Activated CD8-positive, alpha-beta T cell treated with anti-CD3 and anti-CD28 coated beads, Interleukin-2, amount 10 ng/mL, durations not matched to agents 7 days and 5 days (primary cell): ENCODE measurements at regions of chr7 and their contacts with region 1.

Region 1: GRCh38 chr7:65373608-65374351 is at the start of gene ZNF92:
- DNase-seq: peak; percentile 98
- ATAC-seq: peak; percentile 98
- H3K4me3 Mint-ChIP-seq: peak within 1 kb of the TSS; percentile 94
- H3K27ac Mint-ChIP-seq: peak within 1 kb of the TSS; percentile 96
- H3K4me1 Mint-ChIP-seq: peaks cover 29% of the 10 kb centered on the region
- H3K27me3 Mint-ChIP-seq: no peaks in the 10 kb centered on the region
- total RNA-seq, gene ZNF92: 15.3 to 17.3 TPM

Region 2: GRCh38 chr7:65006094-65006992 is 367.4 kb before region 1 on chr7 and contains the start of gene ERV3-1:
- CTCF ChIA-PET with region 1: no interaction called
- POLR2A ChIA-PET with region 1: interaction called, 12 read pairs
- DNase-seq: peak; percentile 97
- ATAC-seq: peak; percentile 100
- H3K4me3 Mint-ChIP-seq: peak within 1 kb of the TSS; percentile 93
- H3K27ac Mint-ChIP-seq: peak within 1 kb of the TSS; percentile 93
- H3K4me1 Mint-ChIP-seq: peaks cover 27% of the 10 kb centered on the region
- H3K27me3 Mint-ChIP-seq: no peaks in the 10 kb centered on the region
- total RNA-seq, gene ERV3-1: 12.5 to 14.8 TPM

Region 3: GRCh38 chr7:65325793-65326432 is 47.9 kb before region 1 on chr7:
- CTCF ChIA-PET with region 1: no interaction called
- POLR2A ChIA-PET with region 1: no interaction called
- DNase-seq: no peak
- ATAC-seq: no peak
- H3K4me3 Mint-ChIP-seq: no peak overlapping the region
- H3K27ac Mint-ChIP-seq: no peak overlapping the region
- H3K4me1 Mint-ChIP-seq: peaks cover 3% of the 10 kb centered on the region
- H3K27me3 Mint-ChIP-seq: no peaks in the 10 kb centered on the region

Region 4: GRCh38 chr7:65475734-65476319 is 102.0 kb after region 1 on chr7:
- CTCF ChIA-PET with region 1: no interaction called
- POLR2A ChIA-PET with region 1: interaction called, 11 read pairs
- DNase-seq: peak; percentile 60
- ATAC-seq: peak; percentile 69
- H3K4me3 Mint-ChIP-seq: peak overlapping the region; percentile 32
- H3K27ac Mint-ChIP-seq: peak overlapping the region; percentile 86
- H3K4me1 Mint-ChIP-seq: peaks cover 34% of the 10 kb centered on the region
- H3K27me3 Mint-ChIP-seq: no peaks in the 10 kb centered on the region